Astrocyte of the cerebellum (primary cell): ENCODE measurements at regions of chr9 and their contacts with region 1.

Region 1: GRCh38 chr9:131943351-131943841 is 136.3 kb downstream of the MED27 start:
- DNase-seq: no peak
- H3K4me3 ChIP-seq: no peak overlapping the region
- CTCF ChIP-seq: no peak

Region 2: DNA sequence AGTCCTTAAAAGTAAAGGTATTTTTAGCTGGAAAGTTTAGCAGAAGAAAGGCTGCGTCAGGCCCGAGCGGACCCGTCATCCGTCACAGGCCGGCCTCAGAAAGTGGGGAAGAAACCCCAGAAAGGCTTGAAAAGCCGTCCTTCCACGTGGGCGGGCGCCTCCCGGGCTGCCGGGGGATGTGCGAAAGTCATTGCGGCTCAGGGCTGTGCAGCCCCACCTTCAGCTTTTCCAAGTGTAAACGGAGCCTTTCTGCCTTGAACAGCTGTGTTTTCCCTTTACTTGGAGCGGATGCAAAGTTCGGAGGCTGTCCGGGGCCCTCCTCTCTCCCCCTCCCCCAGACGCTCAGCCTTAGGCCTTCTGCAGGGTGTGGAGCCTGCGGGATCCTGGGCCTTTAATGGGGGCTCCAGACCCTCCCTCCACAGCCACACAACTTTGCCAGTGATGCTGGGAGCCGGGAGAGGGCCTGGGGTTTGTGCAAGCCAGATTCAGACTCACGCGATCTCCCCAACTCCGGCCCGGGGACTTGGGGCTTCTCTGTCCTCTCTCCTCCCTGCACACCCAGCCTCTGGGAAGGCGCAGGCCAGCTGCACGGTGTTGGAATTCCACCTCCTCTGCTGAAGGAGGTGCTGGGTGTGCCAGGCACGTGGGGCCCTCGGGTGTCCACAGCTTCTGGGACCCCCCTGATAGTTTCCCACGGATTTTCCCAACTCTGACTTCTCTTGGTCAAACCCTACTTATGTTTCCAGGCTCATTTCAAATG is 108.1 kb before region 1 on chr9:
- in situ Hi-C with region 1: no loop called
- DNase-seq: no peak
- H3K4me3 ChIP-seq: no peak overlapping the region
- CTCF ChIP-seq: no peak

Region 3: DNA sequence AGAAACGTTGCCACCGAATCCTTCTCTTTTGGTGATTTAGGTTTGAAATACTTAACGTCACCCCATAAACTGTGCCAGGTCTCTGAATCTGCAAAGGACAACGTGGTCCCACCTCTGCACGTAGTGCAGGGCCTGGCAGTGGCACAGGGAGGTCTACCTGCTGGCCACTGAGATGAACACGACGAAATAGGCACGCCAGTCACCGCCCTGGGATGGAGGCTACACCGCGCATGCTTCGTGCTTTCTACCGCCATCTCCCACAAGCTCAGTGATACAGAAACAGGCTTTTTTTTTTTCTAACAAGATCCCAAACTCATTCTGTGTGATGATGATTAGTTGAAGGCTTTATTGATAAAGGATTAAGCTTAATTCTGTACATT is 63.5 kb before region 1 on chr9:
- in situ Hi-C with region 1: loop called (anchors 5 kb)
- DNase-seq: no peak
- H3K4me3 ChIP-seq: no peak overlapping the region
- CTCF ChIP-seq: no peak